ENCODE measurements at regions of chr12 and their contacts with region 1.

Region 1: GRCh38 chr12:121467115-121467793 is 67.3 kb downstream of the RNF34 start:
- DNase-seq: peak; percentile 93
- ATAC-seq: peak; percentile 94
- H3K4me3 Mint-ChIP-seq: peak overlapping the region; percentile 57
- H3K27ac Mint-ChIP-seq: no peak overlapping the region
- H3K4me1 Mint-ChIP-seq: peaks cover 20% of the 10 kb centered on the region
- H3K27me3 Mint-ChIP-seq: no peaks in the 10 kb centered on the region

Region 2: DNA sequence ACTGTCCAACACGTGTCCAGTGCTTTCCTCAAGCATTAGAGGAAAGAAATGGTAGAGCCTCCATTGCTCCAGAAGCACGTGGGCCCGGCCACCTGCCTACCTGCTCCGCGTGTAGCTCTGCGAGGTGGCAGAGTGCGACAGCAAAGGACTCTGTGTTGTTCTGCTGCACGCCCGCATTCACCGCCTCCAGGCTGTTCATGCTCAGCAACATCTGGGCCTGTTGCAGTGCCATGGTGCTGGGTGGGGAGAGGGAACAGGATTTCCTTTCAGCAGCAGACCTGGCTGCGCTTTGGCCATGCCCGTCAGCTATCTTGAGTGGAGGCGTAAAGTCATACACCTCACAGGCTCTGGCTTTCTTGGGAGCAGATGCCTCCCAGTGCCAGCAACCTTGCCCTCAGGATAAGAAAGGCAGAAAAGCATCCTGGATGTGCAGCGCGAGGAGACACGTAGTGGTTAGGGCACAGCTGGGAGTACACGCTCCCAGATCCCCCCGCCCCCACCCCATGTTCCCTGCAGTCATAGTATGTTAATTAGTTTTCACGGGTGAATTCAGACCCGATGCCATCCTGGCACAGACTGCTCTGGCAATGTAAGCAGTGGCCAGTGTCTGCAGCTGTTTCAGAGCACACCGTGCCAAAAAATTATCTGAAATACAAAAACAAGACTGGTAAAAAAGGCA is 140.1 kb before region 1 on chr12:
- CTCF ChIA-PET with region 1: no interaction called
- POLR2A ChIA-PET with region 1: no interaction called
- intact Hi-C with region 1: no loop called
- DNase-seq: no peak
- ATAC-seq: no peak
- H3K4me3 Mint-ChIP-seq: no peak overlapping the region
- H3K27ac Mint-ChIP-seq: no peak overlapping the region
- H3K4me1 Mint-ChIP-seq: no peaks in the 10 kb centered on the region
- H3K27me3 Mint-ChIP-seq: no peaks in the 10 kb centered on the region

Region 3: DNA sequence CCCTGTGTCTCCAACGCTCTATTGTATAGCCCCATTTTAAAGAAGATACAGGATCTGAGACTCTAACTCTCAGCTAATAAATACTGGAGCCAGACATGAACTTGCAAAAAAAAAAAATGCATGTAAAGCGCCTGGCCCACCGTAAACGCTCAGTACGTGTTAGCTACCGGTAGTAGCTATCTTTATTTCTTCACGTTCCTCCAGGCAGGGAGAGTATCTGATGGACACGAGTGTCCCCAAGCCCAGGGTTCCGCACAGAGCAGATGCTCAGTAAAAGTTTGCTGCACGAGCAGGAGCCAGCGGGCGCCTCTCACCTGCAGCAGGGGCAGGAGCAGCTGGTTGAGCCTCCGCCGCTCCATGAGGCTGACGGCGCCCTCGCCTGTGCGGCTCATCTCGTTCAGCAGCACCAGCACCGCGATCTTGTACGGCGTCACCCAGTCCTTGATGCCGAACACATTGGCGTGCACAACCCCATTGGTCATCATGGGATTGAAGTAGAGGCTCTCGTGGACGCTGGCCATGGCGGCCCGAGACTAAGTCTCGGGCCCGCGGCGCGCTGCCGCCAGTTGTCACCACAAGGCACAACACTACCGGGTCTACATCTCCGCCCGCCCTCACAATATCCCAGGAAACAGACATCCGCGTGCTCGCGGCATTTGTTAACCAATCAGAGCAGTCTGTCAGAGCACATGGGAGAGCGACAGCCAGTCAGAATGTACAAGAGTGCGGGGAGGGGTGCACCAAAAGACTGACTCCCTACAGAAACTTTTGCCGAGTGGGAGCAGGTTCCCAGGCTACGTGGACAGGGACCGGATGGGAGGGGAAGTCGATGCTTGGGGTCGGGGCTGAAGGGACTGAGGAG is 115.2 kb before region 1 on chr12 and contains the start of gene ANAPC5:
- CTCF ChIA-PET with region 1: no interaction called
- POLR2A ChIA-PET with region 1: interaction called, 3 read pairs
- intact Hi-C with region 1: loop called (anchors 1 kb)
- DNase-seq: peak; percentile 94
- ATAC-seq: peak; percentile 99
- H3K4me3 Mint-ChIP-seq: peak within 1 kb of the TSS; percentile 92
- H3K27ac Mint-ChIP-seq: peak within 1 kb of the TSS; percentile 97
- H3K4me1 Mint-ChIP-seq: peaks cover 24% of the 10 kb centered on the region
- H3K27me3 Mint-ChIP-seq: peaks cover under 1% of the 10 kb centered on the region
- total RNA-seq, gene ANAPC5: 113 to 118 TPM

Region 4: DNA sequence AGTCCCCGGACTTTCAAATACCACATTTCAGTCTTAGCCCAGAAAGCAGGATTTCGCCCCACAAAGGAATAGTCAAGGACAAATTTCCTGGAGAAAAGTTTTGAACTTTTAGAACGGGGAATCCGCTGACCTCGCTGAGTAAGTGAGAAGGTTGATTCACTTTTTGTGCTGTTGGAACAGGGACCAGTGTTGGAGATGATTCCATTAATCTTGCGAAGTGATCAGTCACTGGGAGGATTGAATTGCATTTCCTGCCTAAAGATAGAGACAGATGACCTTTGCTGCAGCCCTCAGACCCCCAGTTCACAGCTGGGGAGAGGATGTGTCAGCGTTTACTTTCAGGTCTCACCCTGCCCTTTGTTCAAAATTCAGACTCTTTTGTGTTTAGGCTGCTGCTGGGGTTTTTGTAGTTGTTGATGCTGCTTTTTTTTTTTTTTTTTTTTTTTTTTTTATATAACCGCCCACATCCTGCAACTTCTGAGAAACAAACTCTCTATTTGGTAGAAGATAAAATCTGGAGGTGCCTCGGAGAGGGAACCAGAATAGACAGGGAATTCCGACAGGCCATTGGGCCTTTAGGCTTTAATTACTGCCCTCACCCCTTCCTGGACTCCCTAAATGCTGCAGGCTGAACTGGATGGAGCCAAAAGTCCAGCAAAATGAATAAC is 123.4 kb after region 1 on chr12:
- CTCF ChIA-PET with region 1: no interaction called
- POLR2A ChIA-PET with region 1: no interaction called
- intact Hi-C with region 1: loop called in 1 of 2 experiments (anchors 1 kb)
- DNase-seq: peak; percentile 79
- ATAC-seq: peak; percentile 82
- H3K4me3 Mint-ChIP-seq: peak overlapping the region; percentile 75
- H3K27ac Mint-ChIP-seq: peak overlapping the region; percentile 98
- H3K4me1 Mint-ChIP-seq: peaks cover 32% of the 10 kb centered on the region
- H3K27me3 Mint-ChIP-seq: no peaks in the 10 kb centered on the region

Region 5: DNA sequence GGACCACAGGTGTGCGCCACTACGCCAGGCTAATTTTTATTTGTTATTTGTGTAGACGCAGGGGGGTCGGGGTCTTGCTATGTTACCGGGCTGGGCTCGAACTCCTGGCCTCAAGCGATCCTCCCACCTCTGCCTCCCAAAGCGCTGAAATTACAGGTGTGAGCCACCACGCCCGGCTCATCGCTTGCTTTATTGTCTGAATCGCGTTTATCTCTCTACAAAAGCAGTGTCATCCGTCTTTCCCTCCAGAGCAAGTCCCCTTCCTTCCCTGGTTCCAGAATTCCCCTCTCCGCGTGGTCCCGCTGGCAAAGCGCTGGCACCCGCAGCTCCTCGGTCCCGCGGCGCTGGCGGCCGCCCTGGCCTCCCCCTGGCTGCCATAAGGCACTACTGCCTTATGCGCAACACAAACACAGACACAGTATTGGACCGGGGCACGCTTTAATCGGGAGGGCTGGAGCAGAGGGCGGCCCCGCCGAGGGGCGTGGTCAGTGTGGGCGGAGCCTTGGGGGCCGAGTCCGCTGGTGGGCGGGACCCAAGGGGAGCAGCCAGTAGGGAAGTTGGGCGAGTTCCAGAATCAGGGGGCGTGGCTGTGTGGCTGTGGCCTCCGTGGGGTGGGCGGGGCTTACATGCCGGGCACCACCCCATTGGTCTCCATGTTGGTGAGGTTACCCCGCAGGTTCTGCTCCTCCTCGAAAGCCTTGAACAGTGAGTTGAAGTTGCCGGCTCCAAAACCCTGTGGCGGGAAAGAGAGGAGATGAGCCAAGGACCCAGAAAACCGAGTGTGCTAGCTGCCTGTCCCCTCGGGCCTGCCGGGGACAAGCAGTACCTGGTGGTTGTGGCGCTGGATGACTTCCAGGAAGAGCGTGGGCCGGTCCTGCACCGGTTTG is 372.1 kb after region 1 on chr12:
- CTCF ChIA-PET with region 1: no interaction called
- POLR2A ChIA-PET with region 1: no interaction called
- intact Hi-C with region 1: loop called in 1 of 2 experiments (anchors 1 kb)
- DNase-seq: peak; percentile 100
- ATAC-seq: peak; percentile 94
- H3K4me3 Mint-ChIP-seq: peak overlapping the region; percentile 91
- H3K27ac Mint-ChIP-seq: peak overlapping the region; percentile 91
- H3K4me1 Mint-ChIP-seq: peaks cover 14% of the 10 kb centered on the region
- H3K27me3 Mint-ChIP-seq: no peaks in the 10 kb centered on the region

Measured in activated CD4-positive, alpha-beta T cell treated with anti-CD3 and anti-CD28 coated beads for 36 hours (primary cell).